HepG2 (cell line): ENCODE measurements at regions of chr14 and their contacts with region 1.

Region 1: GRCh38 chr14:95561001-95561412 is 26.2 kb downstream of the GLRX5 start:
- DNase-seq: peak; percentile 84
- ATAC-seq: peak; percentile 90
- H3K4me3 ChIP-seq: no peak overlapping the region
- H3K27ac ChIP-seq: no peak overlapping the region
- H3K4me1 ChIP-seq: peaks cover 41% of the 10 kb centered on the region
- H3K27me3 ChIP-seq: no peaks in the 10 kb centered on the region
- CTCF ChIP-seq: peak; percentile 97
- EP300 ChIP-seq: no peak
- POLR2A ChIP-seq: no peak
- RAD21 ChIP-seq: peak; percentile 97

Region 2: GRCh38 chr14:95609387-95609990 is 48.5 kb after region 1 on chr14:
- CTCF ChIA-PET with region 1: interaction called, 4 read pairs
- POLR2A ChIA-PET with region 1: no interaction called
- in situ Hi-C with region 1: no loop called
- intact Hi-C with region 1: loop called (anchors 2 kb)
- DNase-seq: peak; percentile 39
- ATAC-seq: peak; percentile 85
- H3K4me3 ChIP-seq: no peak overlapping the region
- H3K27ac ChIP-seq: no peak overlapping the region
- H3K4me1 ChIP-seq: no peaks in the 10 kb centered on the region
- H3K27me3 ChIP-seq: peaks cover 3 to 55% of the 10 kb centered on the region in 2 experiments; a peak in 4 of 5 replicates
- CTCF ChIP-seq: peak; percentile 61
- EP300 ChIP-seq: no peak
- POLR2A ChIP-seq: no peak
- RAD21 ChIP-seq: peak; percentile 63

Region 3: GRCh38 chr14:95774265-95775160 is 213.5 kb after region 1 on chr14:
- CTCF ChIA-PET with region 1: interaction called, 32 read pairs
- POLR2A ChIA-PET with region 1: no interaction called
- in situ Hi-C with region 1: loop called (anchors 5 kb)
- intact Hi-C with region 1: loop called (anchors 1 kb)
- DNase-seq: peak; percentile 41
- ATAC-seq: peak; percentile 54; the same call in 2 of the 3 replicates
- H3K4me3 ChIP-seq: no peak overlapping the region
- H3K27ac ChIP-seq: no peak overlapping the region
- H3K4me1 ChIP-seq: no peaks in the 10 kb centered on the region
- H3K27me3 ChIP-seq: 0 out of 5 replicates have a peak, but pooled peaks cover 0 to 5% of the 10 kb centered on the region in 2 experiments
- CTCF ChIP-seq: peak; percentile 75
- EP300 ChIP-seq: no peak
- POLR2A ChIP-seq: no peak
- RAD21 ChIP-seq: no peak; the same call in 1 of the 2 replicates

Region 4: GRCh38 chr14:96051642-96052540 is 490.9 kb after region 1 on chr14:
- CTCF ChIA-PET with region 1: interaction called, 4 read pairs
- POLR2A ChIA-PET with region 1: no interaction called
- in situ Hi-C with region 1: no loop called
- intact Hi-C with region 1: loop called (anchors 1 kb)
- DNase-seq: peak; percentile 33
- ATAC-seq: peak; percentile 82
- H3K4me3 ChIP-seq: no peak overlapping the region
- H3K27ac ChIP-seq: no peak overlapping the region
- H3K4me1 ChIP-seq: no peaks in the 10 kb centered on the region
- H3K27me3 ChIP-seq: peaks cover 0 to 7% of the 10 kb centered on the region in 2 experiments; a peak in 2 of 5 replicates
- CTCF ChIP-seq: peak; percentile 57
- EP300 ChIP-seq: no peak
- POLR2A ChIP-seq: no peak
- RAD21 ChIP-seq: no peak